ENCODE measurements at regions of chr18 and their contacts with region 1.

Region 1: GRCh38 chr18:13159579-13159978 is 59.0 kb upstream of the LDLRAD4 start:
- DNase-seq: peak; percentile 74
- H3K4me3 ChIP-seq: no peak overlapping the region
- H3K27ac ChIP-seq: no peak overlapping the region
- H3K4me1 ChIP-seq: no peaks in the 10 kb centered on the region
- CTCF ChIP-seq: peak; percentile 88

Region 2: DNA sequence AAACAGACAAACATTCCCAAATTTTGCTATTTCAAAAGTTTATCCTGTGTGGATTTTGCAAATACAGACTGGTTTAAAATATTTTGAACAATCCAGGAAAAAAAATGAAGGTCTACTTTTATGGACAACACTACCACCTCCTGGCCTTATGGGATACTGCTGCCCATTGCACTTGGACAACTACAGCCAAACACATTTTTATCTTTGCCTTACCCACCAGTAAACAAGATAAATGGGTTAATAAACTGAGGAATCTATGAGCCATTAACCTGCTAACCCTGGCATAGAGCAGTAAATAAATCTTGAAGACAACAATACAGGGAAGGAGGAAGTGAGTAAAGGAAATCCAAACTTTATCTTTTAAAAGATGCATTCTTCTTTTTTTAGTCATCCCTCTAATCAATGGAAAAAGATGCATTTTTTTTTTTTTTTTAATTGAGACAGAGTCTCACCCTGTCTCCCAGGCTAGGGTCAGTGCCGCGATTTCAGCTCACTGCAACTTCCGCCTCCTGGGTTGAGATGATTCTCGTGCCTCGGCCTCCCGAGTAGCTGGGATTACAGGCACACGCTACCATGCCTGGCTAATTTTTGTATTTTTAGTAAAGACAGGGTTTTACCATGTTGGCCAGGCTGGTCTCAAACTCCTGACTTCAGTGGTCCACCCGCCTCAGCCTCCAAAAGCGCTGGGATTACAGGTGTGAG is 499.5 kb before region 1 on chr18:
- CTCF ChIA-PET with region 1: no interaction called
- POLR2A ChIA-PET with region 1: no interaction called
- intact Hi-C with region 1: loop called (anchors 10 kb)
- DNase-seq: peak; percentile 47
- H3K4me3 ChIP-seq: no peak overlapping the region
- H3K27ac ChIP-seq: no peak overlapping the region
- H3K4me1 ChIP-seq: peaks cover 3% of the 10 kb centered on the region
- CTCF ChIP-seq: peak; percentile 95

Region 3: GRCh38 chr18:12726774-12727550 is 432.6 kb before region 1 on chr18:
- CTCF ChIA-PET with region 1: interaction called, 3 read pairs
- POLR2A ChIA-PET with region 1: no interaction called
- intact Hi-C with region 1: loop called (anchors 2 kb)
- DNase-seq: peak; percentile 76
- H3K4me3 ChIP-seq: no peak overlapping the region
- H3K27ac ChIP-seq: no peak overlapping the region
- H3K4me1 ChIP-seq: peaks cover 8% of the 10 kb centered on the region
- CTCF ChIP-seq: peak; percentile 96

Region 4: DNA sequence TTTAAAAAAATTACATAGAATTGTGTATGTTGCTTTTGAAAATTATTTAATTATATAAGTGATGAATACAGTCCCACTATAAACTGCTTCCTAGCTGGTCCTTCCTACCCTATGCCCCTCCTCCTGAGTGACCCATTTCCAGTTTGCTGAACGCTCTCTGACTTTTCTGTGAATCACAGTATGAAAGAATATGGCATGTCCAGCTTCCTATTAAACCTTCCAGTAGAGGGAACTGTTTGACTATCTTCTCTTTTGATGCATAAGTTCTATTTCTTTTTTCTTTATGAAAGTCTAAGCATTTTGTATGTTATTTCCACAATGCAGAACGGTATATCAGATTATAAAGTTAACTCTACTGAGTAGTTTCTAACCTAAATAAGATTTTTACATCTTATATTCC is 415.5 kb before region 1 on chr18:
- CTCF ChIA-PET with region 1: no interaction called
- POLR2A ChIA-PET with region 1: no interaction called
- intact Hi-C with region 1: loop called (anchors 5 kb)
- DNase-seq: peak; percentile 74
- H3K4me3 ChIP-seq: no peak overlapping the region
- H3K27ac ChIP-seq: no peak overlapping the region
- H3K4me1 ChIP-seq: peaks cover 18% of the 10 kb centered on the region
- CTCF ChIP-seq: peak; percentile 94

Region 5: DNA sequence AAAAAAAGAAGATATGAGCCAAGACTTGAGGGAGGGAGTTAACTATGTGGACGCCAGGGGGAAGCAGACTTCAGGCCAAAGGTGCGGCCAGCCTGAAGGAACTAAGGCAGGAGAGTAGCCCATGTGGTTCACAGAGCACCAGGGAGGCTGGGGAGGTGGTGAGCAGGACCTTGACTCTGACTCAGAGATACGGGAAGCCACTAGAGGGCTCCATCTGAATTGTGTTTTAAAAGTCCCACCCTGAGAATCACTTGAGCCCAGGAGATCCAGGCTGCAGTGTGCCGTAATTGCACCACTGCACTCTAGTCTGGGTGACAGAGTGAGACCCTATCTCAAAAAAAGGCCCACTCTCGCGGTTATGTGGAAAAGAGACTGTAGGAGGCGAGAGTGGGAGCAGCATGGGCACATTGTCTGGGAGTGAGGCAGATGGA is 156.1 kb before region 1 on chr18:
- CTCF ChIA-PET with region 1: no interaction called
- POLR2A ChIA-PET with region 1: no interaction called
- intact Hi-C with region 1: loop called (anchors 5 kb)
- DNase-seq: peak; percentile 34
- H3K4me3 ChIP-seq: no peak overlapping the region
- H3K27ac ChIP-seq: no peak overlapping the region
- H3K4me1 ChIP-seq: no peaks in the 10 kb centered on the region
- CTCF ChIP-seq: peak; percentile 75

Measured in OCI-LY7 (cell line).